Breast epithelium (tissue), 4 donors: ENCODE measurements at regions of chr6 and their contacts with region 1.

Region 1: GRCh38 chr6:53456809-53457208 is 88.1 kb downstream of the GCLC start:
- DNase-seq: no peak
- H3K4me3 ChIP-seq: no peak overlapping the region
- H3K27ac ChIP-seq: no peak overlapping the region
- H3K4me1 ChIP-seq: no peaks in the 10 kb centered on the region
- H3K27me3 ChIP-seq: no peaks in the 10 kb centered on the region
- CTCF ChIP-seq: no peak
- POLR2A ChIP-seq: no peak

Region 2: DNA sequence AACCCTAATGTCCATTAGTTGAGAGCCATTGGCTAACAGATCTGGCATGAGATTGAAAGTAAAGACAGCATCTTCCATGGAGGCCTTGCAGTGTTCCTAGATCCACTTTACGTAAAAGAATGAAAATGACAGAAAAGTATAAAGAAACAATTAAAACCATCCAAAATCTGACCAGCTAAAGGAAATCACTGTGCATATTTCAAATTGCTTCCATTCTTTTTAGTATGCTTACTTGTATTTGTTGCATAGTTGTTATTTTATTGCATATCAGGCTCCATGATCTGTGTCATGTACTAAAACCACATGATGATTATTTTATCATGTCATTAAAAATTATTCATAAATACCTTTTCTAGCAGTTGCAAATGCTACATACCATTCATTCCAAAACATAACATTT is 20.2 kb after region 1 on chr6:
- intact Hi-C with region 1: loop called (anchors 1 kb)
- DNase-seq: no peak
- H3K4me3 ChIP-seq: no peak overlapping the region
- H3K27ac ChIP-seq: no peak overlapping the region
- H3K4me1 ChIP-seq: no peaks in the 10 kb centered on the region
- H3K27me3 ChIP-seq: no peaks in the 10 kb centered on the region
- CTCF ChIP-seq: no peak
- POLR2A ChIP-seq: no peak

Region 3: GRCh38 chr6:53496797-53497375 is 40.1 kb after region 1 on chr6:
- intact Hi-C with region 1: no loop called
- DNase-seq: no peak
- H3K4me3 ChIP-seq: no peak overlapping the region
- H3K27ac ChIP-seq: no peak overlapping the region
- H3K4me1 ChIP-seq: no peaks in the 10 kb centered on the region
- H3K27me3 ChIP-seq: no peaks in the 10 kb centered on the region
- CTCF ChIP-seq: no peak
- POLR2A ChIP-seq: no peak

Region 4: DNA sequence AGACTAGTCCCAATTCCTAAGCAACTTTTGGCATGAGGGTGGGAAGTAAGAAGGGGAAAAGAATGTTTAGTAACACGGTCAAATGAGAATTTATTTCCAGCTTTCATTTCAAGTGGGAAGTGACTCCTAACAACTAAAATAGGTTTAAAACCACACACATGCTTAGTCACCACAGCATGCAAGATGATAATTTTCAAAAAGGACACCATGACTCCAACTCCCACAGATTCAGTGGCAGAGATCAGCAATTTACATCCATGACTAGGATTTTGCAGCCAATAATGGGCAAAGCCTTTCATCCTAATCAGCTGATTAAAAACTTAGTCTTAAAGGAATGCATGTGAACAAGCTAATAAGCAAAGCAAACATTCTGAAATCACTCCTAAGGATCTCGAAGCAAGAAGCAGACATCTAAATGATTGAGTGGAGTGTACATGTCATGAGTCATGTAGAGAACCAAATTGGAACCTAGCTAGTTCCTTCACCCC is 136.2 kb after region 1 on chr6:
- intact Hi-C with region 1: no loop called
- DNase-seq: no peak
- H3K4me3 ChIP-seq: no peak overlapping the region
- H3K27ac ChIP-seq: no peak overlapping the region
- H3K4me1 ChIP-seq: no peaks in the 10 kb centered on the region
- H3K27me3 ChIP-seq: no peaks in the 10 kb centered on the region
- CTCF ChIP-seq: no peak
- POLR2A ChIP-seq: no peak